PC-9 (cell line): ENCODE measurements at regions of chr19 and their contacts with region 1.

Region 1: GRCh38 chr19:57947208-57948134 is at the start of gene ZNF256:
- DNase-seq: peak; percentile 86 to 96
- H3K4me3 ChIP-seq: peak within 1 kb of the TSS; percentile 91
- H3K27ac ChIP-seq: peak within 1 kb of the TSS; percentile 35; the same call in 1 of the 2 replicates
- H3K4me1 ChIP-seq: peaks cover 9% of the 10 kb centered on the region
- H3K27me3 ChIP-seq: 0 out of 2 replicates have a peak, but pooled peaks cover 4% of the 10 kb centered on the region
- CTCF ChIP-seq: peak; percentile 63
- total RNA-seq, gene ZNF256: 6.3 and 6.4 TPM in 2 replicates

Region 2: GRCh38 chr19:57477191-57478008 is 470.1 kb before region 1 on chr19 and contains the start of gene ZNF772:
- CTCF ChIA-PET with region 1: no interaction called
- POLR2A ChIA-PET with region 1: no interaction called
- intact Hi-C with region 1: loop called (anchors 1 kb)
- DNase-seq: peak; percentile 89 to 94
- H3K4me3 ChIP-seq: peak within 1 kb of the TSS; percentile 70
- H3K27ac ChIP-seq: no peak within 1 kb of the TSS
- H3K4me1 ChIP-seq: no peaks in the 10 kb centered on the region; the same call in 1 of the 2 replicates
- H3K27me3 ChIP-seq: no peaks in the 10 kb centered on the region
- CTCF ChIP-seq: peak; percentile 79
- total RNA-seq, gene ZNF772: 8.3 and 9.1 TPM in 2 replicates

Region 3: GRCh38 chr19:58002384-58003173 is 55.1 kb after region 1 on chr19 and contains the start of gene ZNF606:
- CTCF ChIA-PET with region 1: no interaction called
- POLR2A ChIA-PET with region 1: no interaction called
- intact Hi-C with region 1: loop called (anchors 1 kb)
- DNase-seq: peak; percentile 69 to 84
- H3K4me3 ChIP-seq: peak within 1 kb of the TSS; percentile 96
- H3K27ac ChIP-seq: peak within 1 kb of the TSS; percentile 31
- H3K4me1 ChIP-seq: 0 out of 2 replicates have a peak, but pooled peaks cover 10% of the 10 kb centered on the region
- H3K27me3 ChIP-seq: no peaks in the 10 kb centered on the region
- CTCF ChIP-seq: no peak
- total RNA-seq, gene ZNF606: 16.3 and 21.6 TPM in 2 replicates